WTC11 (cell line): ENCODE measurements at regions of chr2 and their contacts with region 1.

Region 1: GRCh38 chr2:231674587-231675338 is 33.6 kb upstream of the PTMA start:
- DNase-seq: peak; percentile 93
- ATAC-seq: peak; percentile 58
- H3K4me3 Mint-ChIP-seq: no peak overlapping the region
- H3K27ac Mint-ChIP-seq: peak overlapping the region; percentile 94
- H3K4me1 Mint-ChIP-seq: peaks cover 49% of the 10 kb centered on the region
- H3K27me3 Mint-ChIP-seq: no peaks in the 10 kb centered on the region
- CTCF ChIP-seq: peak; percentile 56

Region 2: GRCh38 chr2:231604685-231605606 is 69.8 kb before region 1 on chr2:
- CTCF ChIA-PET with region 1: interaction called, 236 read pairs
- POLR2A ChIA-PET with region 1: interaction called, 17 read pairs
- DNase-seq: peak; percentile 99
- ATAC-seq: peak; percentile 75
- H3K4me3 Mint-ChIP-seq: peak overlapping the region; percentile 61
- H3K27ac Mint-ChIP-seq: peak overlapping the region; percentile 94
- H3K4me1 Mint-ChIP-seq: peaks cover 30% of the 10 kb centered on the region
- H3K27me3 Mint-ChIP-seq: no peaks in the 10 kb centered on the region
- CTCF ChIP-seq: no peak

Region 3: GRCh38 chr2:231627384-231628120 is 47.2 kb before region 1 on chr2:
- CTCF ChIA-PET with region 1: interaction called, 56 read pairs
- POLR2A ChIA-PET with region 1: interaction called, 14 read pairs
- DNase-seq: no peak
- ATAC-seq: no peak; the same call in 1 of the 2 replicates
- H3K4me3 Mint-ChIP-seq: no peak overlapping the region
- H3K27ac Mint-ChIP-seq: peak overlapping the region; percentile 86
- H3K4me1 Mint-ChIP-seq: peaks cover 9% of the 10 kb centered on the region
- H3K27me3 Mint-ChIP-seq: no peaks in the 10 kb centered on the region
- CTCF ChIP-seq: no peak

Region 4: GRCh38 chr2:231648587-231649174 is 26.1 kb before region 1 on chr2:
- CTCF ChIA-PET with region 1: interaction called, 48 read pairs
- POLR2A ChIA-PET with region 1: interaction called, 4 read pairs
- DNase-seq: peak; percentile 84
- ATAC-seq: peak; percentile 89
- H3K4me3 Mint-ChIP-seq: no peak overlapping the region
- H3K27ac Mint-ChIP-seq: no peak overlapping the region
- H3K4me1 Mint-ChIP-seq: peaks cover 21% of the 10 kb centered on the region
- H3K27me3 Mint-ChIP-seq: no peaks in the 10 kb centered on the region
- CTCF ChIP-seq: no peak

Region 5: DNA sequence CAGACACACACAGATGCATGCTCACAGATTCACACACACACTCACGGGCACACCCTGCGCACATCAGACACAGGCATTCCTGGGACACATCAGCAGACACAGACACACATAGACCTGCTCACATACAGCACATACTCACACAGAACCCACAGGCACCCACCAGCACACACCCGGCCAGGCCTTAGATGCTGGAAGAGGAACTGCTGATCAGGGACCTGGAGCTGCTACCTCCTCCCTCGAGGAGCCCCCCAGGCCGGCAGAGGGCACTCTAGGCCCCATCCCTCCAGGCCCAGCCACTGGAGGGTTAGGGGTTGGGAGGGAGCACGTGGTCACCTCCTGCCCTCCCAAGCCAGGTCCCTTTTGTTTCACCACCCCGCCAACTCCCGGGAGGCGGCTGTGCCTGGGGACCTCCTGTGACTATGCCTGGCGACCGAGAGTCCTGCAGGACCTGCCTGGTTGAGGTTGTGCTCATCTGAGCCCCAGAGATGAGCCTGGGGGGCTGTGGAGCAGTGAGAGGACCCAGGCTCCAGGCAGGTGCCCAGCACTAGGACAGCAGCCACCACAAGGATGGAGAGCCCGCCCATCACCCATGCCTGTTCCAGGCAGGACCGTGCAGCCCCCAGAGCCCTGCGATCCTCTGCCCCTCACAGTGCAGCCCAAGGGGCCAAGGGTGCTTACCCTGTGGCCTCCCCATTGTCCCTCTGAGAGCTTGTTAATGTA is 12.5 kb after region 1 on chr2:
- CTCF ChIA-PET with region 1: interaction called, 206 read pairs
- POLR2A ChIA-PET with region 1: interaction called, 5 read pairs
- DNase-seq: peak; percentile 92
- ATAC-seq: peak; percentile 87
- H3K4me3 Mint-ChIP-seq: peak overlapping the region; percentile 64
- H3K27ac Mint-ChIP-seq: peak overlapping the region; percentile 61
- H3K4me1 Mint-ChIP-seq: peaks cover 49% of the 10 kb centered on the region
- H3K27me3 Mint-ChIP-seq: no peaks in the 10 kb centered on the region
- CTCF ChIP-seq: peak; percentile 33

Region 6: DNA sequence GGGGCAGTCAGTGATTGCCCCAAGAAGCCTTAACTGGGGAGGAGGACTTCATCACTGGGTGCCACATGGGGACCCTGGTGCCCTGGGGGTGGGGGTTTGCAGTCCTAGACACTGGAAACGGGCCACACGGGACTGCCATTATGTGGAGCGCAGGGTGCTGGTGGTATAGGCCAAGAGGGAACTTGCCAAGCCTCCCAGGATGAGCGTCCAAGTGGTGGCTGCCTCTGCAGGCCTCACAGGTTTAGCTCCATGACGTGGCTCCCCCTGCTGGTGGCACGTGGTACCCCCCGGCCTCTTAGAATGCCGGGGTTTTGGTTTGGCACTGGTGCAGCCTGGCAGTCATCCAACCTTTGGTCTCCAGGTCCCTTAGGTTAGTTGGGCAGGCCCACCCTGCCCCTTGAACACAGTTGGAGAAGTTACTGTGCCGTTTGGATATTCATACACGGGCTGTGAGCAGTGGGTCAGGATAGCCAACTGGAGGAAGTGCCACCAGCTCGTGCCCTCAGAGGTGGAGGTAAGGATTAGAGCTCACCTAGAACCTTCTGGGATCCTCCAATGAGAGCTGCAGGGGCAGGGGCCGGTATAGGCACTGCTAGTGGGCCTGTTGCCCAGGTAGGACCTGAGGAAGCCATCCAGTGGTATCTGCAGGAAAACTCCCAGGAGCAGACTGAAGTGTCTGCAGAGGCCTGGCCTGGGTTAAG is 39.1 kb after region 1 on chr2:
- CTCF ChIA-PET with region 1: interaction called, 260 read pairs
- POLR2A ChIA-PET with region 1: interaction called, 61 read pairs
- DNase-seq: peak; percentile 90
- ATAC-seq: peak; percentile 35
- H3K4me3 Mint-ChIP-seq: peak overlapping the region; percentile 56
- H3K27ac Mint-ChIP-seq: peak overlapping the region; percentile 98
- H3K4me1 Mint-ChIP-seq: peaks cover 34% of the 10 kb centered on the region
- H3K27me3 Mint-ChIP-seq: no peaks in the 10 kb centered on the region; the same call in 1 of the 2 replicates
- CTCF ChIP-seq: peak; percentile 93